OCI-LY7 (cell line): ENCODE measurements at regions of chr7 and their contacts with region 1.

Region 1: DNA sequence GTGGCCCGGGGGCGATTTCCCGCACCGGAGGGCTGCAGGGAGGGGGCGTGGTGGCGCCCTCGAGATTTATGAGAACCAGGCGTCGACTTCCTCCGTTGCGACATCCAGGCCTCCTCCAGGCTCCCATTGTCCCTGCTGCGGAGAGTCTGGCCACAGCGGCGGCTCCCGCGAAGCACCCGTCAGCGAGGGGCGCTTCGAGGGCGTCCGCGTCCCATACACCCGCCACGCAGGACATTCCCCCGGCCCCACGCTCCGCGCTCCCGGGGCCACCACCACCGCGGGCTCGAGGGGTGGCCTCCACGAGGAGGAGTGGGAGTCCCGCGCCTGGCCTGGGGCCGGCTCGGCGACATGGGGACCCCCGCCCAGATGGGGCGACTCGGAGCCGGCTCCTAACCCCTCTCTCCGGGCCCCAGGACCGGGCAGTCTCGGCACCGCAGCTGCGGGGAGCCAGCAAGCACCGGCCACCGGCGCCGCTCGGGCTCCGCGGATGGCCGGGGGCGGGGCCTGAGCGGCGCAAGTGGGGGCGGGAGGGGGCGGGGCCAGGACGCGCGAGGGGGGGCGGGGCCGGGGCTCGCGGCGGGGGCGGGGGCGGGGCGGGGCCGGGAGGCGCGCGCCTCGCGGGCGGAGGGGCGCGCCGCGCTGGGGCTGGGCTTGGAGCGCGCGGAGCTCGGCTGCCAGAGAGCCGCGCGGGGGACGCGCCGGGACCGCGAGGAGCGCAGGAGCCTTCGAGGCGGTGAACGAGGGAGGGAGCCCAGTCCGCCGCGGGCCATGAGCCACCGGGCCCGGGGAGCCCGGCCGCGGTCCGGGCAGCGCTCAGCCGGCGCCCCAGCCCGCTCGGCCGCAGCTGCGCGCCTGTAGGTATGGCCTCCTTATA is at the start of gene SH2B2:
- DNase-seq: peak; percentile 77
- H3K4me3 ChIP-seq: peak within 1 kb of the TSS; percentile 95
- H3K27ac ChIP-seq: peak within 1 kb of the TSS; percentile 97
- H3K4me1 ChIP-seq: peaks cover 63% of the 10 kb centered on the region
- CTCF ChIP-seq: peak; percentile 26; the same call in 1 of the 2 replicates
- total RNA-seq, gene SH2B2: 27.3 and 42.0 TPM in 2 replicates

Region 2: GRCh38 chr7:102306875-102307677 is 20.6 kb after region 1 on chr7:
- CTCF ChIA-PET with region 1: interaction called, 9 read pairs
- POLR2A ChIA-PET with region 1: interaction called, 154 read pairs
- intact Hi-C with region 1: loop called (anchors 1 kb)
- DNase-seq: peak; percentile 98
- H3K4me3 ChIP-seq: peak overlapping the region; percentile 57
- H3K27ac ChIP-seq: peak overlapping the region; percentile 98
- H3K4me1 ChIP-seq: peaks cover 92% of the 10 kb centered on the region
- CTCF ChIP-seq: no peak

Region 3: DNA sequence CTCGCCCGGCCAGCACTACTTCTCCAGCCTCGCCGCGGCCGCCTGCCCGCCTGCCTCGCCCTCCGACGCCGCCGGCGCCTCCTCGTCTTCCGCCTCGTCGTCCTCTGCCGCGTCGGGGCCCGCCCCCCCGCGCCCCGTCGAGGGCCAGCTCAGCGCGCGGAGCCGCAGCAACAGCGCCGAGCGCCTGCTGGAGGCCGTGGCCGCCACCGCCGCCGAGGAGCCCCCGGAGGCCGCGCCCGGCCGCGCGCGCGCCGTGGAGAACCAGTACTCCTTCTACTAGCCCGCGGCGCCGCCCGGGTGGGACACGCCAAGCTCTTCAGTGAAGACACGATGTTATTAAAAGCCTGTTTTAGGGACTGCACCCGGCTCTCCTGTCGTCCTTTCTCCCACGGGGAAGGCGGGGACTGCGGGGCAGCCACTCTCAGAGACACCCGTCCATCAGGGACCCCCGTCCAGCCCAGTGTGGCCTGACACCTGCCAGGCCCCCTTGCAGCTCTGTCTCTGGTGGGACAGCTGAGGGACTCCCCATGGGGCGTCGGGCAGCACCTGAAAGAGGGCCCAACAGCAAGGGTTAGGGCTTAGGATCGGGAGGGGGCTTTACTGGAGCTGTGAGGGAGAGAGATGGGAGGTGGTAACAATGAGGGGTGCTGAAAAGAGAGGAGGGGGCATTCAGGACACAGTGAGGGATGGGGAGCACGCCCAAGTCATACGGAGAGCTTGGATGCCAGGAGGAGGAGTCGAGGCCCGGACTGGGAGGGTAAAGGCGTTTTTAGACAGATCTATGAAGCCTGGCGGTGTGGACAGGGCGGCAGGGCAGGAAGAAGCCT is 35.1 kb after region 1 on chr7:
- CTCF ChIA-PET with region 1: no interaction called
- POLR2A ChIA-PET with region 1: no interaction called
- intact Hi-C with region 1: loop called (anchors 5 kb)
- DNase-seq: no peak
- H3K4me3 ChIP-seq: no peak overlapping the region
- H3K27ac ChIP-seq: no peak overlapping the region
- H3K4me1 ChIP-seq: peaks cover 7% of the 10 kb centered on the region
- CTCF ChIP-seq: no peak

Region 4: DNA sequence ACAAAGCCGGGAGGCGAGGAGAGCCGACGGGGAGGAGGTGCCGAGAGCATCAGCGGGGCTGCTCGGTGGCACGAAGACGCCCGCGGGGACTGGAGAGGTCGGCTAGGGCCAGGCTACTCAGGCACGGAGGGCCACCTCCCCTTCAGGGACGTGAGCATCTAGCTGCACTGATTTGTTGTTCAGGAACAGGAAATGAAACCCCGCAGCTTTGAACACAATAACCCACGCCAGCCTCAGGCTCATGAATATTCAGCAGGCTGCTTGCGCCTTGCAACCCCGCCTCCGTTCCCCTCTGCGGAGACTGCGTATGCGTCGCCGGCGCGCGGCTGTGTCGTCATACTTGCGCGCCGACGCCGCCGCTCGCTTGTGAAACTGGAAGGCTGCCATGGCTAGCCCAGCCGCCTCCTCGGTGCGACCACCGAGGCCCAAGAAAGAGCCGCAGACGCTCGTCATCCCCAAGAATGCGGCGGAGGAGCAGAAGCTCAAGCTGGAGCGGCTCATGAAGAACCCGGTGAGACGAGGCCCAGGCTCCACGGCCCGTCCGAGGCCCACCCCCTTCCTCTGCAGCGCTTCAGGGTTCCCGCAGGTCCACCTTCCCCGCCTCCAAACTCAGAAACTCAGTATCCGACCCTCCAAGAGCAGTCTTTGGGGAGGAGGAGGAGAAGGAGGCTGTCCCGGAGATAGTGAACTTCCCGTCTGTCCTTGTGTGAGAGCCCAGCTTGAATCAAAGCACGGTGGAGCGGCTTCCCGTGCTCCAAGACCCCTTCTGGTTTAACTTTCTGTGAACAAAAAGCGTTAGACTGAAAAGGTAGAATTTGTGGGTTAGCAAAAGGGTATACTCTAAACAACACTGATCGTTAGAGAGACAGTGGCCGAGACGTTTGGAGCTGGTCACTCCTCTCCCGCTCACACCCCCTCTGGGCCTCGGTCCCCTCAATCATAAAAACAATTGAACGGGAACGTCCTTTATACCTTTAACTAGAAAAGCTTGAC is 109.8 kb after region 1 on chr7 and contains the start of gene PRKRIP1:
- CTCF ChIA-PET with region 1: interaction called, 3 read pairs
- POLR2A ChIA-PET with region 1: interaction called, 14 read pairs
- intact Hi-C with region 1: no loop called
- DNase-seq: peak; percentile 100
- H3K4me3 ChIP-seq: peak within 1 kb of the TSS; percentile 84
- H3K27ac ChIP-seq: peak within 1 kb of the TSS; percentile 81
- H3K4me1 ChIP-seq: peaks cover 18% of the 10 kb centered on the region
- CTCF ChIP-seq: no peak
- total RNA-seq, gene PRKRIP1: 47.1 and 60.7 TPM in 2 replicates

Region 5: DNA sequence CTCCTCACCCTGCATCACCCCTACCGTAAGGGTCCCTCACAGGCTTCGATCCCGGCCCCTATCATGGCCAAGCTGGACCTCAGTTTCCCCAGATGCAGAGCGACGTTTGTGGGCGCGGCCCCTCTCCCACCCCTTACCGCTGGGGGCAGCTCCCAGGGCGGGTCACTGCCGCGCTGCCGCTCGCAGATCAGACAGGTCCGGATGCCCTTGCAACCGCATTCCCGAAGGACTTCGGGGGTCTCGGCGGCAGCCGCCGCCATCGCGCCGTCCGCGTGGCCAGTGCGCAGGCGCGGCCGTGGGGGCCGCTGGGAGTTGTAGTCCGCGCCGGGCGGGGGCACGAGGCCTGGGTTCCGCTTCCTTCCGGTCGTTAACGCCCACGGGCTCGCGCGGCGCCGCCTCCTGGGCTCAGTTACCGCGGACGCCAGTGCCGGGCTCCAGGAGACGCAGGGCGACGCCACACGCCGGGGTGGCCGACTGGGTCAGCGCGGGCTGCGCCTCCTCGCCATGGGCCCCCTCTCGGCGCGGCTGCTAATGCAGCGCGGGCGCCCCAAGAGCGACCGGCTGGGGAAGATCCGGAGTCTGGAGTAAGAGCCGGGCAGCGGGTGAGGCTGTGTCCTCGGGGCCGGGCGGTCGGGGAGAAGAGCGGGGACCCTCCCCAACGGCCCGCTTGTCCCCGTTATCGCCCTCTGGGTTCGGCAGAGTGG is 178.3 kb after region 1 on chr7 and contains the starts of genes ALKBH4 and LRWD1:
- CTCF ChIA-PET with region 1: no interaction called
- POLR2A ChIA-PET with region 1: no interaction called
- intact Hi-C with region 1: loop called (anchors 5 kb)
- DNase-seq: peak; percentile 95
- H3K4me3 ChIP-seq: peak within 1 kb of the TSS; percentile 97
- H3K27ac ChIP-seq: peak within 1 kb of the TSS; percentile 43
- H3K4me1 ChIP-seq: peaks cover 20% of the 10 kb centered on the region
- CTCF ChIP-seq: 0 out of 2 replicates have a peak, but pooled peaks have one; percentile 36
- total RNA-seq, gene ALKBH4: 17.5 and 23.6 TPM in 2 replicates
- total RNA-seq, gene LRWD1: 63.1 and 68.2 TPM in 2 replicates